Natural killer cell (primary cell): ENCODE measurements at regions of chr4 and their contacts with region 1.

Region 1: DNA sequence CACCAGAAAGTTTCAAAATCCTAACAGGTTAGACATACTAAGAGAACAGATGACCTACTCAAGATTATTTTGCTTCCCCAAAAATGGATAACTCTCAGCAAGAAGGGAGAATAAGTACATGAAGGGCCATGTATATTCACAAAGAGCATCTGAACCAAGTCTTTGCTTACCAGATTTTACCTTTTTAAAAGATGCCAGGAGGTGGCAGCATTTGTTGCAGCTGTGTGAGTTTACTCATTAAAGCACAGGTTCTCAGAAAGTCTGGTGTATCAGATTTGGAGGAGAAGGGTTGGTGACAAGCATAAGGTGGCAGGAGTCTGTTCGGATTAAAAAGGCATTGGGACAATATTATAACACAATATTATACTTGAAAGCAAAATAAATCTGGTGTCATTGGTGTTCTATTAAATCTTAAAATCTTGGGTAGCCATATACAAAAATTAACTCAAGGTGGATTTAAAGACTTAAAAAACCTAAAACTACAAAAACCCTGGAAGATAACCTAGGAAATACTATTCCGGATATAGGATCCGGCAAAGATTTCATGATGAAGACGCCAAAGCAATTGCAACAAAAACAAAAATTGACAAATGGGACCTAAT is 51.3 kb upstream of the NFKB1 start:
- DNase-seq: peak in 1 of 2 donors; percentile 84
- ATAC-seq: peak; percentile 62 to 89 (median 73)
- H3K4me3 ChIP-seq: no peak overlapping the region
- H3K4me3 Mint-ChIP-seq: no peak overlapping the region
- H3K27ac ChIP-seq: no peak overlapping the region
- H3K27ac Mint-ChIP-seq: no peak overlapping the region
- H3K4me1 ChIP-seq: peaks cover 3% of the 10 kb centered on the region
- H3K4me1 Mint-ChIP-seq: peaks cover 8% of the 10 kb centered on the region in 2 donors
- H3K27me3 ChIP-seq: no peaks in the 10 kb centered on the region
- H3K27me3 Mint-ChIP-seq: no peaks in the 10 kb centered on the region
- CTCF ChIP-seq: peak; percentile 61

Region 2: GRCh38 chr4:102620697-102621497 is 171.0 kb after region 1 on chr4:
- intact Hi-C with region 1: loop called (anchors 1 kb)
- DNase-seq: peak in 1 of 2 donors; percentile 55
- ATAC-seq: peak in 1 of 3 donors; percentile 9
- H3K4me3 ChIP-seq: no peak overlapping the region
- H3K4me3 Mint-ChIP-seq: no peak overlapping the region
- H3K27ac ChIP-seq: no peak overlapping the region
- H3K27ac Mint-ChIP-seq: no peak overlapping the region
- H3K4me1 ChIP-seq: peaks cover 4% of the 10 kb centered on the region
- H3K4me1 Mint-ChIP-seq: peaks cover 5 to 7% of the 10 kb centered on the region in 2 donors
- H3K27me3 ChIP-seq: no peaks in the 10 kb centered on the region
- H3K27me3 Mint-ChIP-seq: no peaks in the 10 kb centered on the region
- CTCF ChIP-seq: no peak

Region 3: DNA sequence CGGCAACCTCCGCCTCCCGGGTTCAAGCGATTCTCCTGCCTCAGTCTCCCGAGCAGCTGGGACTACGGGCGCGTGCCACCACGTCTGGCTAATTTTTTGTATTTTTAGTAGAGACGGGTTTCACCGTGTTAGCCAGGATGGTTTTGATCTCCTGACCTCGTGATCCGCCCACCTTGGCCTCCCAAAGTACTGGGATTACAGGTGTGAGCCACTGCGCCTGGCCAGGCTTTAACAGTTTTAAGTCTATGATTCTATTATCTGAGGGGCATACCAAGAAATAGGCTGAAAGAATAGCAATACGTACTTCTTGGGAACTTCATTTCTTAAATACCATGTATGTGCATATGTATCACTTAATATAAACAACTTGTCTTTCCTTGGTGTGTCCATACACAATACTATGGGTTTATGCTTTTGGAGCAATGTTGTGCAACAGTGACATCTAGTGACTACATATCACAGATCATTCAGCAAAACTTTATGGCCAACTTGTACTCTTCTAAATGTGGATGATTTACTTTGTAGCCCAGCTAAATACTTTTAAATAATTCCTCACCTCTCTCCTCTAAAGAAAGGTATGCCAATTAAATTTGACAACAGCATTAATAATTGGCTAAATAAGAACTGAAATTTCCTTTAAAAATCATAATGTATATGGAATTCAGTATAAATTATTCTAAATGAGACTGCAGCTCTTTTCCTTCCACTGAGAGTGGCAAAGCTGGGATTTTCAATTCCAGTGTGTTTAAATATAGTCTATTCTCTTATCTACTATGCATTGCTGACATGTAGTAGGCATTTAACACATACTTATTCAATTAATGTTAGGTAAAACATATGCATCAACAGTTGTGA is 559.2 kb after region 1 on chr4:
- intact Hi-C with region 1: loop called (anchors 1 kb)
- DNase-seq: peak in 1 of 2 donors; percentile 85
- ATAC-seq: peak; percentile 89 to 97 (median 90)
- H3K4me3 ChIP-seq: no peak overlapping the region
- H3K4me3 Mint-ChIP-seq: no peak overlapping the region
- H3K27ac ChIP-seq: no peak overlapping the region
- H3K27ac Mint-ChIP-seq: no peak overlapping the region
- H3K4me1 ChIP-seq: no peaks in the 10 kb centered on the region
- H3K4me1 Mint-ChIP-seq: no peaks in the 10 kb centered on the region
- H3K27me3 ChIP-seq: no peaks in the 10 kb centered on the region
- H3K27me3 Mint-ChIP-seq: peaks cover 3 to 5% of the 10 kb centered on the region in 2 donors
- CTCF ChIP-seq: peak; percentile 85